ENCODE measurements at regions of chr9 and their contacts with region 1.

Region 1: DNA sequence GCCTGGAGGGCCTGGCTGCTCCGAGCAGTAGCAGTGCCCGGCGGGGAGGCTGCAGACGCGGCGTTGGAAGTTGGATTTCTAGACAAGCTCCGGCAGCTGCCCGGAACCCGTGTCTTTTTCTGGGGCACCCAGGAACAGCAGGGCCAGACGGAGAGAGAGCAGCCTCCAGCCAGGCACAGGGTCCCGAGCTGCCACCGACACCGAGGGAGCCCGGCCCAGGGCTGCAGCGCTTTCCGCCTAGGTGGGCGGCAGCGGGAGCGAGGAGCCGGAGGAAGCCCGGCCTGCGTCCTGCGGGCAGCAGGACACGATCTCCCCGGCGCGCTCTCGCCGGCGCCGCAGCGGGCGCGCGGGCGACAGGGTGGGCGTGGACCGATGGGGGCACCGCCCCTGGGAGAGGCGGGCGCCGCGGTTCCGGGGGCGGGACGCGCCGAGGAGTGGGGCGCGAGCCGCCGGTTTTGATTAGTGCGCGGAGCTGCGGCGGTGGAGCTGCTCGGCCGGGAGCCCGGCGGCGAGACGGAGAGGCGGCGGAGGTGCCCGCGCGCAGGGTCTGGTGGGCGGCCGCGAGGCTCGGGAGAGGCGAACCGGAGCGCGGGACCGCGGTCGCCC is at the start of gene UGCG:
- DNase-seq: peak; percentile 69 to 93 (median 84)
- ATAC-seq: peak; percentile 94
- H3K4me3 ChIP-seq: peak within 1 kb of the TSS; percentile 79 to 94
- H3K4me3 Mint-ChIP-seq: peak within 1 kb of the TSS; percentile 95
- H3K27ac ChIP-seq: peak within 1 kb of the TSS; percentile 62 to 71
- H3K27ac Mint-ChIP-seq: peak within 1 kb of the TSS; percentile 94
- H3K4me1 ChIP-seq: peaks cover 41% of the 10 kb centered on the region
- H3K4me1 Mint-ChIP-seq: peaks cover 19% of the 10 kb centered on the region
- H3K27me3 ChIP-seq: no peaks in the 10 kb centered on the region
- H3K27me3 Mint-ChIP-seq: no peaks in the 10 kb centered on the region
- CTCF ChIP-seq: no peak
- total RNA-seq, gene UGCG: 34.0 to 35.5 TPM

Region 2: DNA sequence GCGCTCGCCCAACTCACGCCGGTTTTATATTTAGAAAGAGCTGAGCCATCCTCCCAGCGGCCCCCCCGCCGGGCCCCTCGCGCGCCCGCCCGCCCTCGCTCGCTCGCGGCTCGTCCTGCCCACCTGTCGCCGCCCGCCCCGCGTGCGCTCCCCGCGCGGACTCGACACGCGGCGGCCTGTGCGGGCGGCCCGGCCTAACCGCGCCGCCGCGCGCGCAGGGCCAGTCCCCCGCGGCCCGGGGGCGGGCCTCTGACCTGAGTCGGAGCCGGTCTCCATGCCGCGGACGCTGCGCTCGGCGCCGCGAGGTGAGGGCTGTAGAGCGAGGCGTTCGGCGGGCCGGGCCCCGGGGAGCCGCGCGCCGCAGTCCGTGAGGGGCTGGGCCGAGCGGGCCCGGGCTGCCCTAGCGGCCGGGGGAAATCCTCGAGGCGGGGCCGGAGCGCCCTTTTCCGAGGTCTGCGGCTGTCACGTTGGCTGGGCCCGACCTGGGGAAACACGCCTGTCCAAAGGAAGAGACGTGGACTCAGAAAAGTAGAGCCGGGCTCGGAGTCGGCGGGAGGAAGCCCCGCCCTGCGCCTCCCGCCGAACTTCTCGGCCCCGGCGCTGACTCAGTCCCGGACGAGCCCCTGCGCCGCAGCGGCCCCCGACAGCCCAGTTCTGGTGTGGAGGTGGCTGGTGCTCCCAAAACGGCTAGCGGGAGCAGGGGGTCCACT is 412.4 kb before region 1 on chr9 and contains the start of gene ECPAS:
- CTCF ChIA-PET with region 1: no interaction called
- POLR2A ChIA-PET with region 1: no interaction called
- intact Hi-C with region 1: loop called in 1 of 2 experiments (anchors 10 kb)
- DNase-seq: peak; percentile 35 to 79 (median 63)
- ATAC-seq: peak; percentile 64
- H3K4me3 ChIP-seq: peak within 1 kb of the TSS; percentile 90 to 99
- H3K4me3 Mint-ChIP-seq: peak within 1 kb of the TSS; percentile 86
- H3K27ac ChIP-seq: peak within 1 kb of the TSS; percentile 81 to 85
- H3K27ac Mint-ChIP-seq: peak within 1 kb of the TSS; percentile 81
- H3K4me1 ChIP-seq: peaks cover 7% of the 10 kb centered on the region
- H3K4me1 Mint-ChIP-seq: peaks cover 29% of the 10 kb centered on the region
- H3K27me3 ChIP-seq: no peaks in the 10 kb centered on the region
- H3K27me3 Mint-ChIP-seq: no peaks in the 10 kb centered on the region
- CTCF ChIP-seq: no peak
- total RNA-seq, gene ECPAS: 36.4 to 44.6 TPM

Region 3: GRCh38 chr9:111916234-111916645 is 19.8 kb after region 1 on chr9:
- CTCF ChIA-PET with region 1: no interaction called
- POLR2A ChIA-PET with region 1: interaction called, 3 read pairs
- intact Hi-C with region 1: loop called (anchors 2 kb)
- DNase-seq: no peak
- ATAC-seq: no peak
- H3K4me3 ChIP-seq: no peak overlapping the region
- H3K4me3 Mint-ChIP-seq: peak overlapping the region; percentile 37
- H3K27ac ChIP-seq: peak overlapping the region in 1 of 2 experiments; percentile 1
- H3K27ac Mint-ChIP-seq: peak overlapping the region; percentile 19
- H3K4me1 ChIP-seq: peaks cover 38% of the 10 kb centered on the region
- H3K4me1 Mint-ChIP-seq: peaks cover 55% of the 10 kb centered on the region
- H3K27me3 ChIP-seq: no peaks in the 10 kb centered on the region
- H3K27me3 Mint-ChIP-seq: no peaks in the 10 kb centered on the region
- CTCF ChIP-seq: no peak

Region 4: GRCh38 chr9:112074250-112075008 is 178.0 kb after region 1 on chr9:
- CTCF ChIA-PET with region 1: interaction called, 8 read pairs
- POLR2A ChIA-PET with region 1: interaction called, 7 read pairs
- intact Hi-C with region 1: loop called in 1 of 2 experiments (anchors 1 kb)
- DNase-seq: peak; percentile 34 to 82 (median 70)
- ATAC-seq: peak; percentile 91
- H3K4me3 ChIP-seq: no peak overlapping the region
- H3K4me3 Mint-ChIP-seq: peak overlapping the region; percentile 57
- H3K27ac ChIP-seq: no peak overlapping the region
- H3K27ac Mint-ChIP-seq: peak overlapping the region; percentile 60
- H3K4me1 ChIP-seq: peaks cover 12% of the 10 kb centered on the region
- H3K4me1 Mint-ChIP-seq: peaks cover 18% of the 10 kb centered on the region
- H3K27me3 ChIP-seq: no peaks in the 10 kb centered on the region
- H3K27me3 Mint-ChIP-seq: no peaks in the 10 kb centered on the region
- CTCF ChIP-seq: peak; percentile 96

Region 5: GRCh38 chr9:112486221-112487007 is 590.0 kb after region 1 on chr9 and contains the start of gene KIAA1958:
- CTCF ChIA-PET with region 1: no interaction called
- POLR2A ChIA-PET with region 1: interaction called, 3 read pairs
- intact Hi-C with region 1: loop called (anchors 2 to 10 kb)
- DNase-seq: peak; percentile 50 to 91 (median 81)
- ATAC-seq: peak; percentile 74
- H3K4me3 ChIP-seq: peak within 1 kb of the TSS; percentile 77 to 81
- H3K4me3 Mint-ChIP-seq: peak within 1 kb of the TSS; percentile 97
- H3K27ac ChIP-seq: peak within 1 kb of the TSS; percentile 77 to 78
- H3K27ac Mint-ChIP-seq: peak within 1 kb of the TSS; percentile 94
- H3K4me1 ChIP-seq: peaks cover 12% of the 10 kb centered on the region
- H3K4me1 Mint-ChIP-seq: peaks cover 42% of the 10 kb centered on the region
- H3K27me3 ChIP-seq: no peaks in the 10 kb centered on the region
- H3K27me3 Mint-ChIP-seq: no peaks in the 10 kb centered on the region
- CTCF ChIP-seq: no peak
- total RNA-seq, gene KIAA1958: 7.2 to 7.5 TPM

Region 6: DNA sequence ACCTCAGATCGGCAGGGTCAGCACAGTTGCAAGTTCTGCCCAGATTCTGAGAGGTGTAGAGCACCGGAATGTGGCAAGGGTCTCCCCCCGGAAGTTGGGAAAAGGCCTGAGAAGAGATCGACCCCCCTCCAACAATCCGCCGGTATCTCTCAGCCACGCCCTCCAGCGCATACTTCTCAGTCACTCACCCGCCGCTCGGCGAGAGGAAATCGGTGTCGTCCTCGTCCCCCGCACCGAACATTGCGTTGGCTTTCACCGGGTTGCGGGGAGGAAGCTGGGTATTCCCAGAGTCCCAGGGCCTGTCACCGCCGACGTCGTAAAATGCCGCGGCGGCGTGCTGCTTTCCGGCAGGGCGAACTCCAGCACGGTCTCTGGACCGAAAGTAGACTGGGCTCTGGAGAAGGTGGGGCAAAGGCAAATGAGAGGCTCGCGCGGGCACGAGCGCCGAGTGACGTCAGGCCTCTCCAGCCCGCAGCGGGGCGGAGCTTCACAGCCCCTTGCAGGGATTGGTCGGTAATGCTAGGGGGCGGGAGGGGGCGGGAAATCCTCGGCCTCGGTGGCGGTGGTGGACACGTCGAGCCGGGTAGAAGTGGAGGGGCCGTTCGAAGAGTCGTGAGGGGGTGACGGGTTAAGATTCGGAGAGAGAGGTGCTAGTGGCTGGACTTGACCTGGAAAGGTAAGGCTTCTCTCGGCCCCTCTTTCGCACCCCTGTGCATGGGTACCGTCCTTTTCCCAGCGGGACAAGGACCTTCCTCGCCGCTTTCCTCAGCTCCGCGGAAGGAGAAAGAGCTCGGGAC is 1324.7 kb after region 1 on chr9 and contains the starts of genes FKBP15 and SLC31A1:
- CTCF ChIA-PET with region 1: no interaction called
- POLR2A ChIA-PET with region 1: no interaction called
- intact Hi-C with region 1: loop called (anchors 2 kb)
- DNase-seq: peak; percentile 91 to 99 (median 95)
- ATAC-seq: peak; percentile 99
- H3K4me3 ChIP-seq: peak within 1 kb of the TSS; percentile 84 to 94
- H3K4me3 Mint-ChIP-seq: peak within 1 kb of the TSS; percentile 95
- H3K27ac ChIP-seq: peak within 1 kb of the TSS; percentile 71 to 90
- H3K27ac Mint-ChIP-seq: peak within 1 kb of the TSS; percentile 94
- H3K4me1 ChIP-seq: peaks cover 22% of the 10 kb centered on the region
- H3K4me1 Mint-ChIP-seq: peaks cover 57% of the 10 kb centered on the region
- H3K27me3 ChIP-seq: no peaks in the 10 kb centered on the region
- H3K27me3 Mint-ChIP-seq: no peaks in the 10 kb centered on the region
- CTCF ChIP-seq: no peak
- total RNA-seq, gene FKBP15: 8.7 to 8.9 TPM
- total RNA-seq, gene SLC31A1: 8.7 to 9.6 TPM

Measured in CD8-positive, alpha-beta T cell (primary cell).